Activated T-helper 2 cell treated with anti-CD3 and anti-CD28 coated beads, Interferon-gamma antibody, Interleukin-2, Interleukin-4, amounts not matched to agents 10 μg/mL and 5 μg/mL and 100 μg/mL, durations not matched to agents 14 hours and 24 hours and 36 hours (primary cell): ENCODE measurements at regions of chr15 and their contacts with region 1.

Region 1: DNA sequence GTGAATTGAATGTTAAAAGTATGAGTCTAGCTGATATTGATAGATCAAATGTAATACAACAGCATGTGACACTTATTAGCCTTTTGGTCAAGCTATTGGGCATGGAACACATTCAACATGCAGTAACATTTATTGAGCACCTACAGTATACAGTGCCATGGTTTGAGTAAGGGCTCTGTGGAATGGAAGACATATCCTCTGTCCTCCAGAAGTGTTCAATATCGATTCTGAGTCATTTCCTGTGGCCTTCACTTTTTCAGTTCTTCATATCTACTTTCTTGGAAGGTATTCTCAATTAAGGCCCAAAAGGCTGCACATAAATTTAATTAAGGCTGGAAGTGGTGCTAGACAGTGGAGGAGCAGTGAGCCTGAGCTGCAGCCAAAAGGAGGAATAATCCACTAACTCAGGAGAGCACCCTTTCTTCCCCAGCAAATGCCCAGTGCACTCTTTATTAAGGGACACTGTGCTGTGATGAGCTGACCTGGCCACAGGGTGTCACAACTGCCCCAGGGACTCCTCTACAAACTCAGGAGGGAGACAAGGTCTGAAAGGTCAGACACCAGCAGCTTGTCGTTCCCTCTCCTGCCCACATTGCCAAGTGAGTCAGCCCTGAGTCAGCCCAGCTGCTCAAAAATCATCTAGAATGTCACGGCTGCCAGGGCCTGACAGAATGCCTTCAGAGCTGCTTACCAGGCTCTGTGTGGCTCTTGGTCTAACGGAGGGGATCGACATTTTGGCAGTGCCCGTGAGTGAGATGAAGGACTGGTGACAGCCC is 544.8 kb downstream of the AGBL1 start:
- DNase-seq: peak; percentile 65
- H3K4me3 Mint-ChIP-seq: peak overlapping the region; percentile 33
- H3K27ac Mint-ChIP-seq: peak overlapping the region; percentile 80
- H3K4me1 Mint-ChIP-seq: peaks cover 58% of the 10 kb centered on the region
- H3K27me3 Mint-ChIP-seq: no peaks in the 10 kb centered on the region

Region 2: DNA sequence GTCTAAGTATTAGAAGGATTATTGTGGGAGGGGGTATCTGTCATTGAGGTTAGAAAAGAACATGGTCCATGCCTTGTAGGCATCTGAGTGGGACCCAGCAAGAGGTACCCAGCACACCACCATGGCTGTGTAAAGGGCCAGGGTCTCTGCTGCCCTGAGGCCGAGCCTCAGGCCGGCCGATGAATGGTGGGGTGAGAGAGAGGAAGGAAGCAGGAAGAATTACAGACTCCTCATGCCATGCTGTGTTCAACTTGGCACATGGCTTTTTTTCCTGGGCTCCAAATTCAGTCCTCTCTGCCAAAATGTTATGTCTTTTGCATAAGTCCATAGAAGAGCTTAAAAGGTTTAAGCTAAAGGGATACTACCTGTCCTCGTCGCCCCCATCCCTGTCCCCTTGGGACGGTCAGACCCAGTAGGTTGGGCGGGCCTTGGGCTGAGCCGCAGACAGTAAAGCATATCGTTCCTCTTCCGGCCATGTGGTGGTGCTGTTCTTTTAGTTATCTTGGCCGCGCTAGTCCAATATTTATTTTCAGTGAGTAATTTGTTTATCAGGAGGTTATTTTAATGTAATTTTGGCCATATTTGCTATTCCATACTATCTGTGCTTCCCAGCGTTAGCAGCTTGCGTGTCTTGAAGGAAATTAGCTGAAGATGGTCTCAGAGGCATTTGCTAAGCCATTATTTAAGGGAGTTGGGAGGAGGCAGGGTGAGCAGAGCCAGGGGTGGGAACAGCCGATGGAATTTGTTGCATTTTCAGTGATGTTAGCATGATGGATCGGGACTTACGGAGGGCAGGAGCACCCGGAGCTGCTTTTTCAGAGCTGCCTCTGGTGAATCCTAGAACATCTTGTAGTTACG is 392.4 kb before region 1 on chr15:
- intact Hi-C with region 1: loop called (anchors 5 kb)
- DNase-seq: no peak
- H3K4me3 Mint-ChIP-seq: no peak overlapping the region
- H3K27ac Mint-ChIP-seq: no peak overlapping the region
- H3K4me1 Mint-ChIP-seq: peaks cover 5% of the 10 kb centered on the region
- H3K27me3 Mint-ChIP-seq: peaks cover 19% of the 10 kb centered on the region

Region 3: GRCh38 chr15:86611417-86612040 is 12.9 kb before region 1 on chr15:
- intact Hi-C with region 1: loop called (anchors 1 kb)
- DNase-seq: peak; percentile 37
- H3K4me3 Mint-ChIP-seq: peak overlapping the region; percentile 33
- H3K27ac Mint-ChIP-seq: peak overlapping the region; percentile 84
- H3K4me1 Mint-ChIP-seq: peaks cover 63% of the 10 kb centered on the region
- H3K27me3 Mint-ChIP-seq: no peaks in the 10 kb centered on the region

Region 4: DNA sequence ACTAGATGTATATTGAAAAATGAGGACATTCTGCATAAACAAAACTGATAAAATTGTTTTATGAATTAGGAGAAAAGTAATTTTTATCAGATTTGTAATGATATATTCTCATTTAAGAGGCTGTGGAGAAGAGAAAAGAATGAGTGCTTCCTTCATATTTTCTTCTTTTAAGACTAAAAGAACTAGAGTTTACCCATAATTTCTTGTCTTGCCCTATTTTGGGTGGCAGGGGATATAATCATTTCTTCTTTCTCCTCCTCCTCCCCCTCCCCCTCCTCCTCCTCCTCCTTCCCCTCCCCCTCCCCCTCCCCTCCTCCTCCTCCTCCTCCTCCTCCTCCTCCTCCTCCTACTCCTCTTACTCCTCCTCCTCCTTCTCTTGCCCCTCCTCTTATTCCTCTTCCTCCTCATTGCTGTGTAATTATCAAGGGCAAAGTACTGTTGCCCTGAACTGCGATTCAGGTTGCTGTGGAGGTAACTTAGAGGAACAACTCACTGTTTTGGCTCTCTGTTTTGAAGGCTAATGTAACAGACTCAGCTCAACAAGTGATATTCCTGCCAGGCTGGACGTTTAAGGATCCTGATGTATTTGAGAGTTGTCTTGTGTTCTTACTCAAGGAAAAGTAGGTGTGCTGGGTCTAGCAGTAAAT is 10.7 kb after region 1 on chr15:
- intact Hi-C with region 1: no loop called
- DNase-seq: no peak
- H3K4me3 Mint-ChIP-seq: no peak overlapping the region
- H3K27ac Mint-ChIP-seq: no peak overlapping the region
- H3K4me1 Mint-ChIP-seq: peaks cover 25% of the 10 kb centered on the region
- H3K27me3 Mint-ChIP-seq: no peaks in the 10 kb centered on the region

Region 5: DNA sequence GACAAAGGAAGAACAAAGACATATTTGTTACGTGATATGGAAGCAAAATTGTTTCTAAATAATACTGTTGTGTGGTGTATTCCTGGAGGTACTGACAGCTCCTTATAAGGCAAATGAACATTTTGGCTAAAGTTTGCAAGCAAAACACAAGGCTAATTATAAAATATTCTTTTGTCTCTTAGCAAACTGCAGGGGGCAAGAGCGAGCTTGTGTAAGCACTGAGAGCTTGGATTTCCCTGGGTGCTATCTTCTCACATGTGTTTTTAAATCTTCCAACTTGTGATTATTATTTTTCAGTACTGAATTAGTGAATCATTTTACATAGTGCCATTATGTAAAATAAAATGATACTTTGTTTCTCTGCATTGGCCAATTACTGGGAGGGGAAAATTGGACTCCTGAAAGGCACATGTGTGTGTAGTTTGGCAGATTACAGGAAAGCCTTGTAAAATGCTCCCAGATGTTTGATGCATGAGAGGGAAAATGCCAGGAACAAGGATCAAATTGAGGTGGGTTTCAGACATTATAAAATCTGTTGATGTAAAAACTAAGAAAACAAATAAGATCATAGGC is 66.7 kb after region 1 on chr15:
- intact Hi-C with region 1: loop called (anchors 2 kb)
- DNase-seq: no peak
- H3K4me3 Mint-ChIP-seq: no peak overlapping the region
- H3K27ac Mint-ChIP-seq: no peak overlapping the region
- H3K4me1 Mint-ChIP-seq: peaks cover 6% of the 10 kb centered on the region
- H3K27me3 Mint-ChIP-seq: no peaks in the 10 kb centered on the region

Region 6: GRCh38 chr15:86743283-86743903 is 118.9 kb after region 1 on chr15:
- intact Hi-C with region 1: loop called (anchors 1 kb)
- DNase-seq: peak; percentile 38
- H3K4me3 Mint-ChIP-seq: no peak overlapping the region
- H3K27ac Mint-ChIP-seq: no peak overlapping the region
- H3K4me1 Mint-ChIP-seq: peaks cover 15% of the 10 kb centered on the region
- H3K27me3 Mint-ChIP-seq: no peaks in the 10 kb centered on the region

Region 7: DNA sequence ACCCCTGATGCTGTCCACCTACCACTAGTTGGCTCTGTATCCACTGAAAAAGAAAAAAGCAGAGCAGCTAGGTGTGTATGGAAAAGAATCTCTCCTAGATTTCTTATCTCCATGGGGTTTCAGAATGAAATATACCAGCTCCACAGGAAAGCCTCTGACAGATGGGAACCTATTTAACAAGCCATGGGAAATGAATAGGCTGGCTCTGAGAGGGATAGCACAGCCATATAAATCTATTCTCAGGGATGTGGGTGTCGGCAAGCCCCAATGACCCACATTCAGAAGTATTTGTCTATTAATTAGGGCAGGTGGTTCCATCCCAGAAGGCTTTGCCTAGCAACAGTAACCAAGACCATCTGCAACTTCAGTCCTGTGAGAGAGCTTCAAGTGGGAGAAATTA is 149.3 kb after region 1 on chr15:
- intact Hi-C with region 1: no loop called
- DNase-seq: no peak
- H3K4me3 Mint-ChIP-seq: no peak overlapping the region
- H3K27ac Mint-ChIP-seq: no peak overlapping the region
- H3K4me1 Mint-ChIP-seq: no peaks in the 10 kb centered on the region
- H3K27me3 Mint-ChIP-seq: no peaks in the 10 kb centered on the region

Region 8: DNA sequence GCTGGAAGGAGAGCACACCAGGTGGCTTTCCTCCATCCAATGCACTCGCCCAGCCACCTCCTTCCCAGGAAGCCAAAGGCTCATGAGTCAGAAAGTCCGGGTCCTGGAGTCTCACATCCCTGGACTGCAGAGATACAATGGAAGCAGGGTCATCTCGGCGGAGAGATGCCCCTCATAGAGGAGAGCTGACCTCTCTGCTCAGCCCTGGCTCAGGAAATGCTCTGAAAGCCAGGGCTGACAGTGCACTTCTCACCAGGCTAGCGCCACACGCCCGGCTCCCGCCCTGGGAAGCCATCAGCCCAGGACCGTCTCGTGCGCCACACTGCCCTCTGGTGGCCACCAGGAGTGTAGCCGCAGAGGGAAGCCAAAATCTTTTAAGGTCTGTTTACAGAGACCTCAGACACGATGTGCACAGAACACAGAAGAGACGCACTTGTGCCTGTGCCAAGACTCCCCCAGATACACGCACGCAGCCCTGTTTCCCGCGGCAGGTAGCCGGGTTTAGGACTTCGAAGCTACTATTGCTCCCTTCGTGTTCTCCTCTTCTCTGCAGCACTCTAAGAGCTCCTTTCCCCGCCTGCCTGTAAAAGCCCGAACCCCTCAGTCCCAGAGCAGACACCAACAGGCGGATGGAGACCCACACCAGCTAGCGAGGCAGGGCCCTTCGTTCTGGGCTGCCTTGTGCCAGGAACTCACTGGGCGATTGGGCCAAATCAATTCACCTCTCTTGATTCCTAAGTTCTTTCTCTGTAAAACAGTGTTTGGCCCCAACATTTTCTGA is 1622.4 kb after region 1 on chr15:
- intact Hi-C with region 1: loop called (anchors 5 kb)
- DNase-seq: peak; percentile 58
- H3K4me3 Mint-ChIP-seq: no peak overlapping the region
- H3K27ac Mint-ChIP-seq: no peak overlapping the region
- H3K4me1 Mint-ChIP-seq: peaks cover 2% of the 10 kb centered on the region
- H3K27me3 Mint-ChIP-seq: peaks cover 20% of the 10 kb centered on the region